ENCODE measurements at regions of chr2 and their contacts with region 1.

Region 1: GRCh38 chr2:135620198-135620597 is 88.9 kb downstream of the R3HDM1 start:
- DNase-seq: no peak
- H3K4me3 Mint-ChIP-seq: no peak overlapping the region
- H3K27ac Mint-ChIP-seq: no peak overlapping the region
- H3K4me1 Mint-ChIP-seq: peaks cover 9% of the 10 kb centered on the region
- H3K27me3 Mint-ChIP-seq: no peaks in the 10 kb centered on the region

Region 2: GRCh38 chr2:135637456-135638087 is 17.4 kb after region 1 on chr2:
- CTCF ChIA-PET with region 1: interaction called, 6 read pairs
- intact Hi-C with region 1: loop called (anchors 2 kb)
- DNase-seq: no peak
- H3K4me3 Mint-ChIP-seq: no peak overlapping the region
- H3K27ac Mint-ChIP-seq: peak overlapping the region; percentile 21
- H3K4me1 Mint-ChIP-seq: peaks cover 10% of the 10 kb centered on the region
- H3K27me3 Mint-ChIP-seq: no peaks in the 10 kb centered on the region

Measured in activated naive CD4-positive, alpha-beta T cell treated with anti-CD3 and anti-CD28 coated beads for 36 hours (primary cell).